Left ventricle myocardium inferior (tissue), 1 donor: ENCODE measurements at regions of chr10 and their contacts with region 1.

Region 1: DNA sequence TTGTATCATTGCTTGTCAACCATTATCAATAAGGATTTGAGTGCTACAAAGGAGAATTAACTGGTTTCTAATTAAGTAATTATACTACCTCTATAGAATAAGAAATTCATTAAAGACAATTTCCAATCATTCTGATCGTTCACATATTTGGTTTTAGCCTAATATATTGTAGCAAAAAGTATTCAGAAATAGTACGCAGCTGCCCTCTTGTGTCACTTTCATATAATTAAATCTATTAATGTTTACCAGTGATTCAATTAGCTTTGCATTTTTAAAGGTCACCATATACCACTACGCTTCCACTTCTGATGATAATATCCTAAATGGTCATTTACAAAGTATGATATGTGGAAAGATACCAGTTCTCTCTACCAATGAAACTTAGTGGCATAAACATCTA is 128.3 kb downstream of the NEBL start:
- DNase-seq: no peak
- H3K4me3 ChIP-seq: no peak overlapping the region
- H3K27ac ChIP-seq: no peak overlapping the region
- H3K4me1 ChIP-seq: peaks cover 7% of the 10 kb centered on the region
- H3K27me3 ChIP-seq: no peaks in the 10 kb centered on the region
- CTCF ChIP-seq: peak; percentile 68

Region 2: GRCh38 chr10:19819419-19820033 is 949.3 kb before region 1 on chr10:
- intact Hi-C with region 1: loop called (anchors 10 kb)
- DNase-seq: no peak
- H3K4me3 ChIP-seq: peak overlapping the region; percentile 83
- H3K27ac ChIP-seq: peak overlapping the region; percentile 89
- H3K4me1 ChIP-seq: peaks cover 43% of the 10 kb centered on the region
- H3K27me3 ChIP-seq: peaks cover 24% of the 10 kb centered on the region
- CTCF ChIP-seq: peak; percentile 90

Region 3: DNA sequence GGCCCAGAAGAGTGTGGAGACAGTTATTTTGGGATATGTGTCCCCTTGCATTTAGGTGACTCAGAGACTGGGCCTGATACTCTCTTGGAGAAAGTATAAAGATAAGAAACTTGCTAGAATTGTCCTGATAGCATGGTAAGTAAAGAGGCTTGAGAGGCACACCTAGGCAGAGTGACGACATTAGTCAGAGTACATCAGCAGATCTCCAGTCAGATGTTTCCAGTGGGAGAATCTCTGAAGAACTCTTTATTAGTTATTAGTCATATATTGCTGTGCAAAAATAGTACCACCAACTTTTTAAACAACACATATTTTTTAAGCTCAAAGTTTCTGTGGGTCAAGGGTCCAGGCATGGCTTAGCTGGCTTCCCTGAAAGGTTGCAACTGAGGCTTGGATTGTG is 54.3 kb before region 1 on chr10:
- intact Hi-C with region 1: no loop called
- DNase-seq: no peak
- H3K4me3 ChIP-seq: no peak overlapping the region
- H3K27ac ChIP-seq: no peak overlapping the region
- H3K4me1 ChIP-seq: no peaks in the 10 kb centered on the region
- H3K27me3 ChIP-seq: no peaks in the 10 kb centered on the region
- CTCF ChIP-seq: no peak

Region 4: GRCh38 chr10:21194464-21194993 is 425.7 kb after region 1 on chr10:
- intact Hi-C with region 1: no loop called
- DNase-seq: no peak
- H3K4me3 ChIP-seq: no peak overlapping the region
- H3K27ac ChIP-seq: peak overlapping the region; percentile 18
- H3K4me1 ChIP-seq: peaks cover 7% of the 10 kb centered on the region
- H3K27me3 ChIP-seq: no peaks in the 10 kb centered on the region
- CTCF ChIP-seq: no peak